ENCODE measurements at regions of chr17 and their contacts with region 1.

Region 1: GRCh38 chr17:56715613-56716357 is 117.9 kb downstream of the C17orf67 start:
- DNase-seq: peak; percentile 89
- ATAC-seq: peak; percentile 95
- H3K4me3 Mint-ChIP-seq: no peak overlapping the region
- H3K27ac Mint-ChIP-seq: no peak overlapping the region
- H3K4me1 Mint-ChIP-seq: peaks cover 3% of the 10 kb centered on the region
- H3K27me3 Mint-ChIP-seq: no peaks in the 10 kb centered on the region

Region 2: GRCh38 chr17:56499799-56500388 is 215.9 kb before region 1 on chr17:
- CTCF ChIA-PET with region 1: interaction called, 56 read pairs
- POLR2A ChIA-PET with region 1: no interaction called
- intact Hi-C with region 1: loop called (anchors 1 kb)
- DNase-seq: peak; percentile 45
- ATAC-seq: no peak
- H3K4me3 Mint-ChIP-seq: no peak overlapping the region
- H3K27ac Mint-ChIP-seq: no peak overlapping the region
- H3K4me1 Mint-ChIP-seq: no peaks in the 10 kb centered on the region
- H3K27me3 Mint-ChIP-seq: no peaks in the 10 kb centered on the region

Region 3: GRCh38 chr17:56653877-56654276 is 61.9 kb before region 1 on chr17:
- CTCF ChIA-PET with region 1: interaction called, 22 read pairs
- POLR2A ChIA-PET with region 1: no interaction called
- intact Hi-C with region 1: loop called (anchors 2 kb)
- DNase-seq: peak; percentile 79
- ATAC-seq: peak; percentile 98
- H3K4me3 Mint-ChIP-seq: no peak overlapping the region
- H3K27ac Mint-ChIP-seq: no peak overlapping the region
- H3K4me1 Mint-ChIP-seq: peaks cover 6% of the 10 kb centered on the region
- H3K27me3 Mint-ChIP-seq: no peaks in the 10 kb centered on the region

Region 4: GRCh38 chr17:56694825-56695224 is 21.0 kb before region 1 on chr17:
- CTCF ChIA-PET with region 1: interaction called, 10 read pairs
- POLR2A ChIA-PET with region 1: no interaction called
- intact Hi-C with region 1: no loop called
- DNase-seq: no peak
- ATAC-seq: no peak
- H3K4me3 Mint-ChIP-seq: no peak overlapping the region
- H3K27ac Mint-ChIP-seq: no peak overlapping the region
- H3K4me1 Mint-ChIP-seq: peaks cover 1% of the 10 kb centered on the region
- H3K27me3 Mint-ChIP-seq: peaks cover 3% of the 10 kb centered on the region

Region 5: DNA sequence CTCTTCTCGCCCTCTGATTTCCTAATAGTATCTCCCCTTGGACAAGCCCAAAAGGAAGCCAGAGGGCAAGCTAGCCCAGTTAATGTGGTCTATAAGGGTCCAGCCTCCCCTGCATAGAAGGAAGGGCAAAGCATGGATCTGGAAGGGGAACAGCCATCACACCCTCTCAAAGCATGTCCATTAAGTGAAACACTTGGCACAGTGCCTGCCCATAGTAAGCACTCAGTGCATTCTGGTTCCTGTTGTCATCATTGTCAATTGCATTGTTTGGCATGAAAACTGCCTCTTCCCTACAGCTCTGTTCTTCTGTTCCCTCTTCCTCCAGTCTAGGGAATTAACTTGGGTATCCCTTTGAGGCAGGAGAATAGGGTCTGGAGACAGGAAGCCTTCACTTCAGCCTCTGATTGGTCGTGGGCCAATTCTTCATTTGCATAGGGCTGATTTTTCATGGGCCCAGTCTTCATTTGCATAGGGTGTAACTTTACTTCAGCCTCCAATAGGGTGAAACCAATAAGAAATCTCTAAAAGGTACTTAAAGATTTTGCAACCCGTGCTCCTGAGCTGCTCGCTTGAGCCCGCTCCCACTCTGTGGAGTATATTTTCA is 36.6 kb after region 1 on chr17:
- CTCF ChIA-PET with region 1: interaction called, 10 read pairs
- POLR2A ChIA-PET with region 1: no interaction called
- intact Hi-C with region 1: no loop called
- DNase-seq: no peak
- ATAC-seq: no peak
- H3K4me3 Mint-ChIP-seq: no peak overlapping the region
- H3K27ac Mint-ChIP-seq: no peak overlapping the region
- H3K4me1 Mint-ChIP-seq: peaks cover 29% of the 10 kb centered on the region
- H3K27me3 Mint-ChIP-seq: no peaks in the 10 kb centered on the region

Region 6: GRCh38 chr17:56824503-56824902 is 108.7 kb after region 1 on chr17:
- CTCF ChIA-PET with region 1: no interaction called
- POLR2A ChIA-PET with region 1: no interaction called
- intact Hi-C with region 1: no loop called
- DNase-seq: no peak
- ATAC-seq: no peak
- H3K4me3 Mint-ChIP-seq: no peak overlapping the region
- H3K27ac Mint-ChIP-seq: peak overlapping the region; percentile 17
- H3K4me1 Mint-ChIP-seq: peaks cover 16% of the 10 kb centered on the region
- H3K27me3 Mint-ChIP-seq: no peaks in the 10 kb centered on the region

Measured in activated CD4-positive, alpha-beta T cell treated with anti-CD3 and anti-CD28 coated beads for 36 hours (primary cell).